ENCODE measurements at regions of chr20 and their contacts with region 1.

Region 1: DNA sequence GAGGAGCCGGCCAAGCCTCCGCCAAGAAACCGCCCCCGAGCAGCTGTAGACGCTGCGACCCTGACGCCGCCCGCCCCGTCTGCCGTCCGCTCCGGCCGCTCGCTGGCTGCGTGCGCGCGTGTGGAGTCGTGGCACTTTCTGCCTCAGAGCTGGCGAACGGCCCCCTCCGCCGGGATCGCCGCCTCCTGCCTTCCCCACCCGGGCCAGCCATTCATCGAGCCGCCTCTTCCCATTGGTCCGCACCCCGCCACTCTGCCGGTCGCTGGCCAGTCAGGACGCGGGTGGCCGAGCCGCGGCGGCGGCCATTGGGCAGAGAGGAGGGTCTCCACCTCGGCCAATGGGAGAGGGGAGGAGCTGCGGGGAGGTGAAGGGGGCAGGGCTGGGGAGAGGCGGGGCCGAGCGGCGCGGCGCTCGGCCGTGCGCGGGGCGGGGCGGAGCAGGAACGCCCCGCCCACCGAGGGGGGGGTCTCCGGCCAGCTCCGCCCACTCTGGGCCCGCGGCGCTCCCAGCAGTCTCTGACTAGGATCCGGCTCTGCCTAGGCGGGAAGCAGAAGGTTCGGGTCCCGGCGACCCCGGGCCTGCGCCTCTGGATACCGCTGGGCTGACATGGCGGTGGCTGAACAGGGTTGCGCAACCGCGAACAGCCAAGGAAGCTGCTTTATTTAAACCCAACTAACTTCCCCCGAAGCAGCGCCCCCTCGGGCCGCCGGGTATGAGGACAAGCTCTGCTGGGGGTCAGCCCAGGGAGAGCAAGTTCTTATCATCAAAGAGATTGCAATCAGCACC is at the start of gene RRBP1:
- DNase-seq: peak; percentile 97
- ATAC-seq: peak; percentile 83 to 95 (median 89)
- H3K4me3 ChIP-seq: peak within 1 kb of the TSS; percentile 77
- H3K4me3 Mint-ChIP-seq: peak within 1 kb of the TSS; percentile 94
- H3K27ac ChIP-seq: peak within 1 kb of the TSS; percentile 89
- H3K27ac Mint-ChIP-seq: peak within 1 kb of the TSS; percentile 80 to 94
- H3K4me1 ChIP-seq: peaks cover 19% of the 10 kb centered on the region
- H3K4me1 Mint-ChIP-seq: peaks cover 28 to 29% of the 10 kb centered on the region in 2 donors
- H3K27me3 ChIP-seq: peaks cover 2% of the 10 kb centered on the region
- H3K27me3 Mint-ChIP-seq: peaks cover 26 to 34% of the 10 kb centered on the region in 2 donors
- CTCF ChIP-seq: peak; percentile 89
- total RNA-seq, gene RRBP1: 88.3 to 95.4 (median 90.1) TPM

Region 2: DNA sequence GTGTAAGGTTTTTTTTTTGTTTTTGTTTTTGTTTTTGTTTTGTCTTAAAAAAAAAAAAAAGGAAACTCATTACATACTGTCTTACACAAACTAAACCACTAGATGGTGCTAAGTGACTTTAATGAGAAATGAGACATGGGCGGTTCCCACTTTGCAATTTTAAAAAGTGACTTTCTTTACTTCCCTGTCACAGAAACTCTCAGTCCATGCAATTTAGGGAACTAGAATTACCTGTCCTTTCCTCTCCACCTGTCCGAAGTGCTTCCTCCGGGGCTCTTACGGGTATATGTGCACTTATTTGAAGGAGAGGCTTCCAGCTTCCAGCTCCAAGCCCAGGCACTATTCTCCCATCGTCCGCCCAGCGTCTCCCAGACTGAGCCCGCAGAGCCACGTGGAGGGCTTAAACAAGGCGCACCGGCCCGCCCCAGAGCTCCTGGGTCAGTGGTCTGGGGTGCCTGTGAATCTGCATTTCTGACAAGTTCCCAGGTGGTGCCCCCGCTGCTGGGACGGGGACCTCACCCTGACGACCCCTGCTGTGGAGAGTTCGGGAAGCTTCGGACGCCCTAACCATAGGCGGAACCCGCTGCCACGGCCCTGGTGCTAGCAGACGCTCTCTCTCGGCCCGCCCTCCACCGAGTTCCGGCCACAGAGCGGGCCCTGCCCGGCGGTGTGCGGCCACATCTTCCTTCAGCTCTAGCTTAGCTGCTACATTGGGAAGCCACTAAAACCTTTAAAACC is 177.2 kb before region 1 on chr20:
- intact Hi-C with region 1: loop called (anchors 1 kb)
- DNase-seq: peak; percentile 63 to 82
- ATAC-seq: peak; percentile 64 to 83 (median 78)
- H3K4me3 ChIP-seq: peak overlapping the region; percentile 43
- H3K4me3 Mint-ChIP-seq: peak overlapping the region; percentile 90
- H3K27ac ChIP-seq: peak overlapping the region; percentile 74
- H3K27ac Mint-ChIP-seq: peak overlapping the region; percentile 85 to 93
- H3K4me1 ChIP-seq: peaks cover 48% of the 10 kb centered on the region
- H3K4me1 Mint-ChIP-seq: peaks cover 55 to 56% of the 10 kb centered on the region in 2 donors
- H3K27me3 ChIP-seq: no peaks in the 10 kb centered on the region
- H3K27me3 Mint-ChIP-seq: no peaks in the 10 kb centered on the region
- CTCF ChIP-seq: peak; percentile 80

Region 3: DNA sequence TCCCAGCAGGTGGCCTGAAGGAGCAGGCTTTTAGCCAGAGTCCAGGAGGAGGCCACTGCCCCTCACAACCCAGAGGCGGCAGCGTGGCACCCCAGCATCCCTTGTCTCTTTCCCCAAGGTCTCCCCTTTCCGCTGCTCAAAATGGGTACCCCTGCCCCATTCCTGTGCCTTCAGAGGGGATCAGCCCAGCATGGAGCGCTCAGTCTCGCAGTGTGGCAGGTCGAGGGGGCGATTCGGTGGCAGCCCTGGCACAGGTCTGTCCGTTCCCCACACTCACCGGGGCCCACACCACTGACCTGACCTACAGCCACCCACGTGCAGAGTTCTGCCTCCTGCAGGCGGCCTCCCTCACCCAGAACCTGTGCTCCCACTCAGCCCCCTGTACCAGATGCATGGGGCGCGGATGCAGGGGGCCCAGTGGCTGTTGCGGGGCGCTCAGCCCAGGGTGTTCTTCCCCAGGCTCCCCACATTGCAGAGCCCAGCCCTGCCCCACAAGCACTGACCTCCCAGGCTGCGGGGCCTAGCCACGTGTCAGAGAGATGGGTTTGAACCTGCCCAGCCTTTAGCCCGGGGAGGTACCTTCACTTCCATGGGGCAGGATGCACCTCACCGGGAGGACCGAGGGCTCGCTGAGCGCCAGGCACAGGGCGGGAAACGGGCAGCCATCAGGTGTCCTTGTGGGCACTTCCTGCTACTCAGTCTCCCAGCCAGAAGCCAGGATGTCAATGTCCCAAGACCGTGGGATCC is 70.6 kb before region 1 on chr20:
- intact Hi-C with region 1: loop called (anchors 5 kb)
- DNase-seq: no peak
- ATAC-seq: peak in 1 of 3 donors; percentile 2
- H3K4me3 ChIP-seq: no peak overlapping the region
- H3K4me3 Mint-ChIP-seq: peak overlapping the region; percentile 13
- H3K27ac ChIP-seq: peak overlapping the region; percentile 94
- H3K27ac Mint-ChIP-seq: peak overlapping the region; percentile 98
- H3K4me1 ChIP-seq: peaks cover 67% of the 10 kb centered on the region
- H3K4me1 Mint-ChIP-seq: peaks cover 41 to 59% of the 10 kb centered on the region in 2 donors
- H3K27me3 ChIP-seq: no peaks in the 10 kb centered on the region
- H3K27me3 Mint-ChIP-seq: no peaks in the 10 kb centered on the region
- CTCF ChIP-seq: peak; percentile 1

Region 4: GRCh38 chr20:17843246-17844132 is 161.2 kb after region 1 on chr20:
- intact Hi-C with region 1: loop called (anchors 5 kb)
- DNase-seq: peak; percentile 52 to 61
- ATAC-seq: peak; percentile 94 to 97 (median 94)
- H3K4me3 ChIP-seq: no peak overlapping the region
- H3K4me3 Mint-ChIP-seq: peak overlapping the region; percentile 10
- H3K27ac ChIP-seq: peak overlapping the region; percentile 63
- H3K27ac Mint-ChIP-seq: peak overlapping the region; percentile 45 to 91
- H3K4me1 ChIP-seq: peaks cover 56% of the 10 kb centered on the region
- H3K4me1 Mint-ChIP-seq: peaks cover 37 to 53% of the 10 kb centered on the region in 2 donors
- H3K27me3 ChIP-seq: no peaks in the 10 kb centered on the region
- H3K27me3 Mint-ChIP-seq: no peaks in the 10 kb centered on the region
- CTCF ChIP-seq: no peak

Region 5: GRCh38 chr20:17898548-17898994 is 216.3 kb after region 1 on chr20:
- intact Hi-C with region 1: loop called (anchors 1 kb)
- DNase-seq: peak; percentile 64 to 83
- ATAC-seq: peak; percentile 82 to 93 (median 90)
- H3K4me3 ChIP-seq: no peak overlapping the region
- H3K4me3 Mint-ChIP-seq: no peak overlapping the region
- H3K27ac ChIP-seq: no peak overlapping the region
- H3K27ac Mint-ChIP-seq: no peak overlapping the region
- H3K4me1 ChIP-seq: peaks cover 19% of the 10 kb centered on the region
- H3K4me1 Mint-ChIP-seq: peaks cover 15 to 16% of the 10 kb centered on the region in 2 donors
- H3K27me3 ChIP-seq: peaks cover 3% of the 10 kb centered on the region
- H3K27me3 Mint-ChIP-seq: peaks cover 21 to 31% of the 10 kb centered on the region in 2 donors
- CTCF ChIP-seq: peak; percentile 97

Region 6: GRCh38 chr20:17968366-17969279 is 286.3 kb after region 1 on chr20 and contains the starts of genes MGME1 and SNX5:
- intact Hi-C with region 1: loop called (anchors 2 kb)
- DNase-seq: peak; percentile 99
- ATAC-seq: peak; percentile 87 to 97 (median 91)
- H3K4me3 ChIP-seq: peak within 1 kb of the TSS; percentile 88
- H3K4me3 Mint-ChIP-seq: peak within 1 kb of the TSS; percentile 98
- H3K27ac ChIP-seq: peak within 1 kb of the TSS; percentile 99
- H3K27ac Mint-ChIP-seq: peak within 1 kb of the TSS; percentile 95 to 98
- H3K4me1 ChIP-seq: peaks cover 40% of the 10 kb centered on the region
- H3K4me1 Mint-ChIP-seq: peaks cover 80 to 83% of the 10 kb centered on the region in 2 donors
- H3K27me3 ChIP-seq: no peaks in the 10 kb centered on the region
- H3K27me3 Mint-ChIP-seq: no peaks in the 10 kb centered on the region
- CTCF ChIP-seq: no peak
- total RNA-seq, gene MGME1: 10.3 to 25.1 (median 13.0) TPM
- total RNA-seq, gene SNX5: 62.3 to 85.4 (median 72.1) TPM

Measured in natural killer cell (primary cell).